ENCODE measurements at regions of chr17 and their contacts with region 1.

Region 1: DNA sequence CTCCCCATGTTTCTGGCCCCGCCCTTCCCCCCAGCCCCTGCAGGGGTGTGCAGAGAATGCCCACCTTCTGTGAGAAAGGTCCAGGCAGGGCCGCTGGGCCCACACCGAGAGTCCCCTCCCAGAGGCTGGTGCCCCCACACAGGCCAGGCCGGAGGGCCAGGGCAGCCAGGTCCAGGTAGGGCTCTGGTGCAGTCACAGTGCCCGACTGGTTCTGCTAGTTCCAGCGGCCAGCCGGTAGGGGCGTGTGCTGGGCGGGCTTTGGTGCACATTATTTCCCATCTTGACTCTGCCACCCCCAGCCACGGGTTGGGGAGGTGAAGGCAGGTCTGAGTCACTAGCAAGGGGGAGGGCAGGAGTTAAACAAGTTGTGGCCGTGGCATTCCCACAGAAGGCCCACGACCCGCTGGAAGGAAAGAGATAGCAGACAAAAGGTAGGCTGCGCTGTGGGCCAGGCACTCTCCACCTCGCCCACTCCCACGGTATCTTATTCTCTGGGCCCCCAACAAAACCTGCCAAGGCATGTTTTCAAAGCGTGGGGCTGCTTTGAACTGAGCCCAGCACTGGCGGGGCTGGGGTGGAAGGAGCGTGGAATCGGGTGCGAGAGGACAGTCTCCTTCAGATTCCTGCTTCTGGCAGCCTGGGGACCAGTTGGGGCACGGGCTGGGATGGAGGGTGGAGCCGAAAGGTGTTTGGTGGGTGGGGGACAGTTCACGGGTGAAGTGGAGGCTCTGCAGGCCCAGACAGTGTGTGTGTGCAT is 1.9 kb downstream of the EPN3 start:
- DNase-seq: peak; percentile 63
- H3K4me3 Mint-ChIP-seq: no peak overlapping the region
- H3K27ac Mint-ChIP-seq: no peak overlapping the region
- H3K4me1 Mint-ChIP-seq: peaks cover 16% of the 10 kb centered on the region
- H3K27me3 Mint-ChIP-seq: peaks cover 43% of the 10 kb centered on the region

Region 2: GRCh38 chr17:50440172-50440837 is 94.1 kb before region 1 on chr17:
- CTCF ChIA-PET with region 1: no interaction called
- POLR2A ChIA-PET with region 1: no interaction called
- intact Hi-C with region 1: no loop called
- DNase-seq: no peak
- H3K4me3 Mint-ChIP-seq: no peak overlapping the region
- H3K27ac Mint-ChIP-seq: no peak overlapping the region
- H3K4me1 Mint-ChIP-seq: no peaks in the 10 kb centered on the region
- H3K27me3 Mint-ChIP-seq: no peaks in the 10 kb centered on the region

Region 3: DNA sequence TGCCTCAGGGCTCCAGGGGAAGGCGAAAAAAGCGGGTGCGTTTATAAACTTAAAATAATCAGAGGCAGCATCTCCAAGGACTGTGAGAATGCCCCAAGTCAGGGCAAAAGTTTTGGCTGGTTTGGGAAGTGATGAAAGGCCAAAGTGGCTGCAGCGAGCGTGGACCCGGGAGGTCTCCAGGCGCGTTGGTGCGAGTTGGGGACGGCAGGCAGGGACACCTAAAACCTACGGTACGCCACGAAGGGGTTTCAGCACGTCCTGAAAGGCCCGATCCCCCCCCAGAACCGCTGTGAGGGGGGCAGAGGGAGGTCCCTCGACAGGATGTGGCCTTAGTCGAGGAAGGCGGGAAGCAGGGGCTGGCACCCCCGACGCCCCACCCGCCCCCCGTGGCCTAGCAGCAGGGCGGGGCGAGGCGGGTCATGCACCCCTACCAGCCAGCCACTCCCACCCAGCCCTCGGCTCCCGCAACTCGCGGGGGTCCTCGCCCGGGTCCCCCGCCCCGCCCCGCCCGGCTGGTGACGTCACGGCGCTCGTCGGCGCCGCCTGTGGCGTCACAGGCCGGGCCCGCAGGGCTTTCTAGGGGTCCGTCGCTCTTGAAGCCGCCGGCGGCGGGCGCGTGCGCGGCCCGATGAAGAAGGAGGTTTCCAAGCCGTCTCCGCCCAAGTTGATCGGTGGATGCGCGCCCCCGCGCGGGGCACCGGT is 26.4 kb before region 1 on chr17 and contains the start of gene MYCBPAP:
- CTCF ChIA-PET with region 1: interaction called, 5 read pairs
- POLR2A ChIA-PET with region 1: no interaction called
- intact Hi-C with region 1: loop called (anchors 1 kb)
- DNase-seq: peak; percentile 90
- H3K4me3 Mint-ChIP-seq: peak within 1 kb of the TSS; percentile 95
- H3K27ac Mint-ChIP-seq: peak within 1 kb of the TSS; percentile 82
- H3K4me1 Mint-ChIP-seq: peaks cover 49% of the 10 kb centered on the region
- H3K27me3 Mint-ChIP-seq: no peaks in the 10 kb centered on the region
- total RNA-seq, gene MYCBPAP: 8.1 to 8.5 TPM